ENCODE measurements at regions of chr19 and their contacts with region 1.

Region 1: GRCh38 chr19:19488875-19489690 is 26.3 kb downstream of the TSSK6 start:
- H3K4me3 Mint-ChIP-seq: peak overlapping the region; percentile 42
- H3K27ac Mint-ChIP-seq: peak overlapping the region; percentile 88
- H3K4me1 Mint-ChIP-seq: peaks cover 54% of the 10 kb centered on the region
- H3K27me3 Mint-ChIP-seq: no peaks in the 10 kb centered on the region

Region 2: DNA sequence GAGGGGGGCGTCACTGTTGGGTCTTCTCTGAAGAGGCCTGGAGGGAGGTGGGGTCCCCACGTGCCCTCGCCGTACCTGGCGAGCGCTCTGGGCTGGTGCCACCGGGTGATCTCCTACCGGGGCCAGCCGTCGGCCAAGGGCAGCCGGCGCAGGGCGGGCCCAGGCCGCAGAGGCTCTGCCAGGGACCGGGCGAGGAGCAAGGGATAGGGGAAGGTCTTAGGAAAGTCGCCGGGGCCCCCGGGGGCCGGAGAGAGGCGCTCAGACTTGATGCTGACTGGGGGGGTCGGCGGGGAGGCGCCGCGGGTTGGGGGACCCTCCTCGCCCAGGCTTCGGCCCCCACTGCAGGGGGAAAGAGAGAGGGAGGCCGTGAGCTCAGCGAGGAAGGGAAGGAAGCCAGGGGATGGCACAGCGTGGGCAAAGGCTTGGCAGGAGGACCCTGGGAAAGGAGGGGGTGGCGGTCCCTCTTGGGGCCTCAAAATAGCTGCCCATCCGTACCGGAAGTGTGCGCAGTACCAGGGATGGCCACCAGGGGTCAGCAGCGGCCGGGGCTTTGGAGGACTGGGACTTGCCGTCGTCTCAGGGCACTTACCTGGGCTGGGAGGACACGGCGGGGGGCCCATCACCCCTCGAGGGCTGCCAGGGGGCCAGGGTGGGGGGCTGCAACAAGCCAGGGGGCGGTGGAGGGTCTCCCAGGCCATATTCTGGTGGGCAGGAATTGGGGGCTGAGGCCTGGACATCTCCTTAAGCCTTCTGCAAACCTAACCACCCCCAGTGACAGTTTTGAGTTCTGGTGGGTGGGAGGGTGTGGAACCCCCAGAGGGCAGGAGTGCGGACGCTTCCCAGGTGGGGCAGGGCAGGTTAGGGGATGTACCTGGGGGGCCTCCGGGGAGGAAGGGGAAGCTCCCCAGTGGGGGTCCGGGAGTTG is 343.1 kb before region 1 on chr19:
- intact Hi-C with region 1: loop called (anchors 2 kb)
- H3K4me3 Mint-ChIP-seq: no peak overlapping the region
- H3K27ac Mint-ChIP-seq: no peak overlapping the region
- H3K4me1 Mint-ChIP-seq: peaks cover 5% of the 10 kb centered on the region
- H3K27me3 Mint-ChIP-seq: peaks cover 1% of the 10 kb centered on the region

Region 3: GRCh38 chr19:19366612-19367396 is 122.3 kb before region 1 on chr19:
- intact Hi-C with region 1: loop called (anchors 1 kb)
- H3K4me3 Mint-ChIP-seq: no peak overlapping the region
- H3K27ac Mint-ChIP-seq: peak overlapping the region; percentile 72
- H3K4me1 Mint-ChIP-seq: peaks cover 23% of the 10 kb centered on the region
- H3K27me3 Mint-ChIP-seq: no peaks in the 10 kb centered on the region

Region 4: DNA sequence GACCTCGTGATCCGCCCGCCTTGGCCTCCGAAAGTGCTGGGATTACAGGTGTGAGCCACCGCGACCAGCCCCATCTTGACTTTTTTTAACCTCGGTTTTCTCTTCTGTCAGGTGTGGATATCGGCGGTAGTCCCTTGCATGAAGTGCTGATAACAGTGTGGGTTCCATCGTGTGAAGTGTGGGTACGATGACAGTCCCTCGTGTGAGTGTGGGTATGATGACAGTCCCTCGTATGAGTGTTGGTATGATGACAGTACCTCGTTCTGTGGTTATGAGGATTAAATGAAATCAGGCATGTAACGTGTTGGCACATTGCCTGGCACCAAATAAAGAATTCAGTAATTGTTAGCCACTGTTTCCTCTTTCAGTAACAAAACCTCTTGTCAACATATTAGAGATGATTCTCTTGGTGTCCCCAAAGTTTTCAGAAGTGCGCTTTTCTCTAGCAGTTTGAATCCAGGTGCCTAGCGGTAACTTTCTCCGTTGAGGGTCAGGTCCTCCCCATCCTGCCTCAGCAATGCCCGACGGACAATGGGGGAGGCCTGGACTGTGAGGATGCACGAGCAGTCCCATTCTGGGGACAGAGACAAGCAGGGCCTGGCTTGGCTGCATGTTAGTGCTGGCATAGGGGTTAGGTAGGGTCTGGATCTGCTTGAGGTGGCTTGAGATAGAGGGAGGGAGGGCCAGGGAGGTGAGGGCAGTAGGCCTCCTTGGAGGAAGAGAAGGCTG is 68.3 kb before region 1 on chr19:
- intact Hi-C with region 1: no loop called
- H3K4me3 Mint-ChIP-seq: peak overlapping the region; percentile 7
- H3K27ac Mint-ChIP-seq: peak overlapping the region; percentile 54
- H3K4me1 Mint-ChIP-seq: peaks cover 61% of the 10 kb centered on the region
- H3K27me3 Mint-ChIP-seq: no peaks in the 10 kb centered on the region

Region 5: DNA sequence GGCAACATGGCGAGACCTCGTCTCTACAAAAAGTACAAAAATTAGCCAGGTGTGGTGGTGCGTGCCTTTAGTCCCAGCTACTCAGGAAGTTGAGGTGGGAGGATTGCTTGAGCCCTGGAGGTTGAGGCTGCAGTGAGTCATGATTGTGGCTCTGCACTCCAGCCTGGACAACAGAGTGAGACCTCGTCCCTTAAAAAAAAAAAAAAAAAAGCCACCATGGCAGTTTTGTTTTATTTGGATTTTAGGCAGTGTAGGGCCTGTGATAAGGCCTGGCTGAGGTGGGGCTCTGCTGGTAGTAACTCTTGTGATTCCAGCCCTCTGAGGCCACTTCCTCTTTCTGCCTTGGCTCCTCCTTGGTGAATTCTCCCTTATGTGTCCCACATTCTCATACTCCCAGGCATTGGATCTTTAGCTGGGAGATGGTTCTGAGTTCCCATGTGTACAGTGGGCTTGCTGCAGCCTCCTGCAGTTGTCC is 44.4 kb before region 1 on chr19:
- intact Hi-C with region 1: loop called (anchors 5 kb)
- H3K4me3 Mint-ChIP-seq: no peak overlapping the region
- H3K27ac Mint-ChIP-seq: peak overlapping the region; percentile 80
- H3K4me1 Mint-ChIP-seq: peaks cover 85% of the 10 kb centered on the region
- H3K27me3 Mint-ChIP-seq: no peaks in the 10 kb centered on the region